WTC11 (cell line): ENCODE measurements at regions of chr1 and their contacts with region 1.

Region 1: GRCh38 chr1:43934101-43934985 is 742 bp downstream of the ARTN start:
- DNase-seq: peak; percentile 92
- ATAC-seq: peak; percentile 60
- H3K4me3 Mint-ChIP-seq: peak overlapping the region; percentile 84
- H3K27ac Mint-ChIP-seq: peak overlapping the region; percentile 88
- H3K4me1 Mint-ChIP-seq: peaks cover 54% of the 10 kb centered on the region
- H3K27me3 Mint-ChIP-seq: peaks cover 8% of the 10 kb centered on the region
- CTCF ChIP-seq: peak; percentile 78

Region 2: GRCh38 chr1:43545695-43546387 is 388.5 kb before region 1 on chr1:
- CTCF ChIA-PET with region 1: interaction called, 12 read pairs
- POLR2A ChIA-PET with region 1: no interaction called
- DNase-seq: peak; percentile 98
- ATAC-seq: peak; percentile 71
- H3K4me3 Mint-ChIP-seq: peak overlapping the region; percentile 51
- H3K27ac Mint-ChIP-seq: peak overlapping the region; percentile 94
- H3K4me1 Mint-ChIP-seq: peaks cover 70% of the 10 kb centered on the region
- H3K27me3 Mint-ChIP-seq: no peaks in the 10 kb centered on the region
- CTCF ChIP-seq: no peak

Region 3: DNA sequence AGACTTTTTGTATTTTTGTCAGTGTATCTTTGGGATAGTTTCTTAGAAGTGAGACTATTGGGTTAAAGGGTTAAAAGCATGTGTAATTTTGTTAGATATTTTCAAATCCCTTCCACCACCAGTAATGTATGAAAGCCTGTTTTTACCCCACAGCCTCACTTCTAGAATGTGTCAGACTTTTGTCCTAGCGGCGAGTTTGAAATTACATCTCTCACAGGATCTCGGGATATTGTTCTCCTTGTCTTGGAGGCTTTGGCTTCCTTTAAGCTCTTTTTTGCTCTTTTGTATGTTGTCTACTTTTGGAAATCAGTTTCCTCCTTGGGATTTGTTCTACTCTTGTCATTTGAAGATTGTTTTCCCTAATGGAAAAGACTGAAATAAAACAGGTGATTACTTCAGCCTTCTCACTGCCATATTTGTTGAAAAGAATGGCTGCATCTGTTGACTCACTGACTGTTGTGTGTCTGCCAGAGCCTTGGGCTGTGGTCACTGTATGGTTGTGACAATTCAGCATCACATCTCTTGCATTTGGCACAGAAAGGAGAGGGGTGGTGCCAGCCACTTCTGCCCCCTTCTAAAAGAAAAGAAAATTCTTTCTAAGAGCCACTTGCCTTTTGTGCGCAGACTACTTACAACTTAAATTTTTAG is 204.4 kb before region 1 on chr1:
- CTCF ChIA-PET with region 1: interaction called, 12 read pairs
- POLR2A ChIA-PET with region 1: no interaction called
- DNase-seq: no peak
- ATAC-seq: no peak
- H3K4me3 Mint-ChIP-seq: no peak overlapping the region
- H3K27ac Mint-ChIP-seq: no peak overlapping the region
- H3K4me1 Mint-ChIP-seq: no peaks in the 10 kb centered on the region
- H3K27me3 Mint-ChIP-seq: no peaks in the 10 kb centered on the region; the same call in 1 of the 2 replicates
- CTCF ChIP-seq: no peak

Region 4: DNA sequence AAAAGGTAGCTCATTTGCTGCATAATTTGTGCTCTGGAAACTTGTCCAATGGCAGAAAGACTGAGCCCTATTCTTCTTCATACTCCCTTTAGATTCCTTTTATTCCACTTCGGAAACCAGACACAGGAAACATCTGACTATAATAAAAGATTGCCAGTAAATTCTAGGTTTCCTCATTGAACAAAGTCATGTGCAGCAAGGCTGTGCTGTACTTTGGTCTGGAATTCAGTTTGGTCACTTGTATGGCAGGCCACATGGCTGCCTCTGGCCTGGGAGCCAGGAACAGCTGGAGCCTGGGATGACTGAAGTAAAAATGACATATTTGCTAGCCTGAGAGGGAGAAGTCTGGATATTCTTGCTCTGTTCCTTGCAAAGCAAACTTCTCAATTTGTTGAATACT is 147.4 kb before region 1 on chr1:
- CTCF ChIA-PET with region 1: interaction called, 14 read pairs
- POLR2A ChIA-PET with region 1: no interaction called
- DNase-seq: no peak
- ATAC-seq: no peak
- H3K4me3 Mint-ChIP-seq: no peak overlapping the region
- H3K27ac Mint-ChIP-seq: no peak overlapping the region
- H3K4me1 Mint-ChIP-seq: peaks cover 9% of the 10 kb centered on the region
- H3K27me3 Mint-ChIP-seq: no peaks in the 10 kb centered on the region
- CTCF ChIP-seq: no peak

Region 5: GRCh38 chr1:43844114-43844513 is 90.2 kb before region 1 on chr1:
- CTCF ChIA-PET with region 1: interaction called, 27 read pairs
- POLR2A ChIA-PET with region 1: interaction called, 3 read pairs
- DNase-seq: no peak
- ATAC-seq: no peak
- H3K4me3 Mint-ChIP-seq: no peak overlapping the region
- H3K27ac Mint-ChIP-seq: no peak overlapping the region; the same call in 1 of the 2 replicates
- H3K4me1 Mint-ChIP-seq: peaks cover 44% of the 10 kb centered on the region
- H3K27me3 Mint-ChIP-seq: peaks cover 3% of the 10 kb centered on the region; the same call in 1 of the 2 replicates
- CTCF ChIP-seq: no peak

Region 6: DNA sequence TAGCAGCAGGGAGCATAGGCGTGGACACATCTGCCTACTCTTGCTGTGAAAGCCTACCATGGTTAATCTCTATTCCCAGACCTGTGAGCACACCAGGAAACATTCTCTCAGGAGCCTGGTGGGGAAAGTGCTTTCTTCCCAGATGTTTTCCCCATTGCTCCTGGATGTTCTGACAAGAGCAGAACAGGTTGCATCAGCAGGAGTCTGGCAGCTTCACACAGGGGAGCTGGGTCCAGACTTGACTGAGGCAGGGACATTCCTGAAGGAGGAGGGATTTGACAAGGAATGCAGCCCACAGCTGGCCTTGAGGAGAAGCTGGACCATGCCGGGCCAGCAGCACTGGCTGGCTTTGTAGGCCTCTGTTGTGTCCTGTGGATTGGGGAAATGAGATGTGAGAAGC is 21.7 kb before region 1 on chr1:
- CTCF ChIA-PET with region 1: interaction called, 96 read pairs
- POLR2A ChIA-PET with region 1: interaction called, 3 read pairs
- DNase-seq: peak; percentile 65
- ATAC-seq: peak; percentile 81
- H3K4me3 Mint-ChIP-seq: no peak overlapping the region
- H3K27ac Mint-ChIP-seq: no peak overlapping the region; the same call in none of the 2 replicates
- H3K4me1 Mint-ChIP-seq: peaks cover 32% of the 10 kb centered on the region
- H3K27me3 Mint-ChIP-seq: peaks cover 12% of the 10 kb centered on the region
- CTCF ChIP-seq: no peak

Region 7: DNA sequence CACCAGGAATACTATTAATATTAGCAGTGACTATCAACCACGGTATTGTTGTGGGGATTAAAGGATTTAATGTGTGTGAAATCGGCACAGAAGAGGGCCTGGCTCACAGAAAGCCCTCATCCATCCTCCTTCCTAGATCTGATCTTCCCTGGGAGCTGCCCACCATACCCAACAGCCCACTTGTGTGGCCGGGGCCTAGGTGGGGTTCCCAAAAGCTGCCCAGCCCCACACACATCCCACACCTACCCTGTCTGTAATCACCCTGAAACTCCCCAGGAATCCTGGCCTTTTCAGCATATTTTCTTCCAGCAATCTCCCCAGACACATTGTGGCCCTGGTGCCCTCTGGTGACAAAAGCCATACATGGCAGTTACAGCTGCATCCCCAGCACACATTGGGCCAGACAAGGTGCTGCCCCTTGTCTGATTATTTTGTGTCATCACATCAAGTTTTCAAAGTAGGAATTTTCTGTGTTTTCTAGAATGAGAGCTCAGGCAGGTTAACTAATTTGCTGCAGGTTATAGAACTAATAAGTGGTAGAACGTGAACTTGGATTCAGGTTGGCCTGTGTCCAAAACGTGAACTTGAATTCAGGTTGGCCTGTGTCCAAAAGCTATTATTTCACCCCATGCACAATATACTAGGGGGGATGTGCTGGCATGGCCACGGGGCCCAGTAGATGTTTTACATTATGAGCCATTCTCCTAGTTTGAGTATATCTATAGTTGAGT is 102.2 kb after region 1 on chr1:
- CTCF ChIA-PET with region 1: interaction called, 33 read pairs
- POLR2A ChIA-PET with region 1: no interaction called
- DNase-seq: peak; percentile 80
- ATAC-seq: peak; percentile 64
- H3K4me3 Mint-ChIP-seq: no peak overlapping the region
- H3K27ac Mint-ChIP-seq: no peak overlapping the region
- H3K4me1 Mint-ChIP-seq: peaks cover 26% of the 10 kb centered on the region
- H3K27me3 Mint-ChIP-seq: peaks cover 4% of the 10 kb centered on the region
- CTCF ChIP-seq: peak; percentile 55; the same call in 1 of the 2 replicates